B cell (primary cell): ENCODE measurements at regions of chr12 and their contacts with region 1.

Region 1: DNA sequence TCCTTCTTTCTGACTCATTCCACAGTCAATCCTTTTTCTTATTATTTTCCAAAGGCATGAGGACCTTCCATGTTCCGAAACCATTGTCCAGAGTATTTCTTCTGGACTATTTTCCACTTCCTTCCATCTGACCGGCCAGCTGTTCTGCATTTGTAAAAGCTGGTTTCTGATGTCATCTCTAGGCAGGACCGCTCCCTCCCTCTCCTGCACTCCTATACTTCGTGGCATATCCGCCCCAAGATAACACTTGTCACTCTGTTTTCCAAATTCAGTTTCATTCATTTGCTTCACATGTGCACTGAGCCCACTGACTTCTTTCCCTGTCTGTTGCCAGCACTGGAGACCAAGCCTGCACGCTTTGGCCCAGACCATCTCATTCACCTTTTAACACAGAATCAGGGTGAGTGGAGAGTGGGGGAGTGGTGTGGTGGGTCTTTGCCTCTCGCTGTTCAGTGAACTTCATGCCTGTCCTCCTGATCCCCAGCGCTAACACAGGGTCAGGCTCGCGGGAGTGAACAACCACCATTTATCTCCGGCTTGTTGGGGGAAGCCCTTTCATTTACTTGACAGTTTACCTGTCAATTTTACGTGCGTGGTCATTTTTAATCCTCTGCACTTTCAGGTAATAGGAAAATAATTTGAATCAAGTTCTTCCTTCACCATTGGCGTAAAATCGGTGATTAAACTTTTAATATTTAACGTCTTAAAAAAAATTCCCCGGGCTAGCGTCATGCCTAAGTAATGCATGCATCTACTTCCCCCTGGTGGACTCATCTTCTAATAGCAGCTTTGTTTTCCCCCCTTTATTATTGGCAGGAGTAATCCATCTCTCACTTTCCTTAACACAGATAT is 52.5 kb downstream of the C12orf75 start:
- DNase-seq: peak; percentile 71
- ATAC-seq: peak; percentile 66
- H3K4me3 ChIP-seq: no peak overlapping the region
- H3K4me3 Mint-ChIP-seq: no peak overlapping the region
- H3K27ac ChIP-seq: no peak overlapping the region
- H3K27ac Mint-ChIP-seq: no peak overlapping the region
- H3K4me1 ChIP-seq: peaks cover 0 to 3% of the 10 kb centered on the region in 2 donors
- H3K4me1 Mint-ChIP-seq: no peaks in the 10 kb centered on the region
- H3K27me3 ChIP-seq: no peaks in the 10 kb centered on the region
- H3K27me3 Mint-ChIP-seq: no peaks in the 10 kb centered on the region
- CTCF ChIP-seq: peak; percentile 87

Region 2: DNA sequence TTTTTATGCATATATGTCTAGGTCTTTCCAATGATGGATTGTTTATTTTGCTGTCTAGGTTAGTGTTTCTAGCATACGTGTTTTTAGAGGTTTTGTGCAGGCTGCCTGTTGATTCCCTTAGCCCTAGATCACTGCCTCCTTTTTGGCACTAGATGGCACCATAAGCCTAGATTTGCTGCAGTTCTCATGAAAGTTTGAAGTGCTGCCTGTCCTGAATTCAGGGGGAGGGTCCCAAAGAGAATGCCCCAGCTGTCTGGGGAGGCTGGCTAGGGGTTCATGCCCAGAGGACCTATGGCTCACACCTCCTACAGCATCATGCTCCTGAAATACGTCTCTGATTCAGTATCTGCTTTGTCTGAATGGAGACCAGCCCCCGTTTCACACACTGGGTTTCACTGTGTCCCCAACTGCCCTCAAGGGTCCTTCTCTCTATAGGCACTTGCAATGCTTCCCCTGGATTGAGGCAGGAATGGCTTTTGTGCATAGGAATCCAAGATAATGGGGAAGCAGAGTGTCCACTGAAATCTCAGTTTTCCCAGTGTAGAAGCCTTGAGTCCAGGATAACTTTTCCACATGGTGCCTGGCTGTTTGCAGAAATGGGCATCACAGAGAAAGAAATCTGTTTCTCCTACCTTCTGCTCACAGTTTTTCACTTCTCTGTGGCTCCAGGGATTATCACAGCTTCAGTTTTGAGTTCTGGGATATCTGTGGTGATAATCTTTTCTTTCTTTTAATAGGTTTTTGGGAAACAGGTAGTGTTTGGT is 1181.6 kb before region 1 on chr12:
- CTCF ChIA-PET with region 1: interaction called, 14 read pairs
- POLR2A ChIA-PET with region 1: no interaction called
- intact Hi-C with region 1: loop called (anchors 1 kb)
- DNase-seq: peak; percentile 79
- ATAC-seq: peak; percentile 73
- H3K4me3 ChIP-seq: no peak overlapping the region
- H3K4me3 Mint-ChIP-seq: no peak overlapping the region
- H3K27ac ChIP-seq: no peak overlapping the region
- H3K27ac Mint-ChIP-seq: no peak overlapping the region
- H3K4me1 ChIP-seq: no peaks in the 10 kb centered on the region
- H3K4me1 Mint-ChIP-seq: peaks cover 1% of the 10 kb centered on the region
- H3K27me3 ChIP-seq: peaks cover 0 to 4% (median 1%) of the 10 kb centered on the region in 4 experiments
- H3K27me3 Mint-ChIP-seq: peaks cover 19% of the 10 kb centered on the region
- CTCF ChIP-seq: peak; percentile 89

Region 3: DNA sequence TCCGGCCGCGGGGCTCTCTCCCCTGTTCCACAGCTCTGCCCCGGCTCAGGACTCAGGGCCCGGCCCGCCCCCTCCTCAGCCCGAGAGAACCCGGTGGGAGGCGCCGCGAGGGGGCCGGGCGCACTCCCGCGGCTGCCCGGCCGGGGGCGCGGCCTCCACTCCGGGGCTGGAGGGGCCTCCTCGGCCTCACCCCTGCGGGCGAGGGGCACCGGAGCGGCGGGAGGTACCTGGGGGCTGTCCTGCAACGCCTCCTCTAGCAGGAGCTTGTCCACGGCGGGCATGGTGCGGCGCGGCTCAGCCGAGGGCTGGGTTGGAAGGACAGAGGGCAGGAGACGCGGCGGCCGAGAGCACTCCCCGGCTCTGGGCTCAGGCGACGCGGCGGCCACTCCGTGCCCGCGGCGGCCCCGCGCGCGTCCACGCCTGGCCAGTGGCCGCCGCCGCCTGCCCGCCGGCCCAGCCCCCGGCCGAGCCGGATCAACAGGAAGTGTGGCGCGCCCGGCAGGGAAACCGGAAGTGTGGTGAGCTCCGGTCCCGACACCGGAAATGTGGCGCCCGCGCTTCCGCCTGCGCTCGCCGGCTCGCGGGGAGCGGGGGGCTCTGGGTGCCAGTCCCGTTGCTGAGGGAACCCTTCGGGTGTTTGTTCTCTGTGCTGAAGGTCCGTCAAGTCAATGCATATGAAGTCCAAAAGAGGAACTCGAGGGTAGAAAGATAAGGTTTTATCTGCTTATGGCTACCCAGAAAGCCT is 147.1 kb before region 1 on chr12 and contains the start of gene APPL2:
- CTCF ChIA-PET with region 1: interaction called, 14 read pairs
- POLR2A ChIA-PET with region 1: no interaction called
- intact Hi-C with region 1: loop called (anchors 5 kb)
- DNase-seq: peak; percentile 92
- ATAC-seq: peak; percentile 81
- H3K4me3 ChIP-seq: peak within 1 kb of the TSS; percentile 51 to 90 (median 71)
- H3K4me3 Mint-ChIP-seq: peak within 1 kb of the TSS; percentile 95
- H3K27ac ChIP-seq: peak within 1 kb of the TSS; percentile 70 to 95
- H3K27ac Mint-ChIP-seq: peak within 1 kb of the TSS; percentile 94
- H3K4me1 ChIP-seq: peaks cover 44 to 49% of the 10 kb centered on the region in 2 donors
- H3K4me1 Mint-ChIP-seq: peaks cover 38% of the 10 kb centered on the region
- H3K27me3 ChIP-seq: no peaks in the 10 kb centered on the region
- H3K27me3 Mint-ChIP-seq: no peaks in the 10 kb centered on the region
- CTCF ChIP-seq: peak; percentile 66
- total RNA-seq, gene APPL2: 57.7 and 58.3 TPM in 2 replicates

Region 4: DNA sequence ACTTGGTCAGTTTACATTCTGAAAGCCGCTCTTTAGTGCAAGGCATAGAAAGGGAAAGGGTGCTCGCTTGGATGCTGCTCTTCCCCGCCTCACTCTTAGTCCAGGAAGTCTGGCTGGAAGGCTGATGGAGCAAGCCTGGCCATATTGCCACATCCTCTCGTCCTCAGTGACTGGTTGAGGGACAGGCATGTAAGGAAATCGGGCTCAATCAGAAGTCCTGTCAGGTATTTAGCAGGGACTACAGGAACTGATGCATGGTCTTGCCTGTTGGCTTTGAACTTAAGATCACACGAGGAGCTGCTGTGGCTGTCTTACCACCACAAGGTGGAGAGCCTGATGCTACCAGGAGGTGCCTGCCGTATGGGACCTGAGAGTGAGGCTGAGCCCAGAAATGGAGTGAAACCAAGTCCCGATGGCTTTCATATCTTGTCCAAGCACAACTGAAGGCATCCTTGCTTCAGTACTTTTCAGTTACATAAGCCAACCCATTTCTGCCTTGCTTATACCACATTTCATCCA is 63.2 kb before region 1 on chr12:
- CTCF ChIA-PET with region 1: interaction called, 8 read pairs
- POLR2A ChIA-PET with region 1: no interaction called
- intact Hi-C with region 1: loop called (anchors 2 kb)
- DNase-seq: no peak
- ATAC-seq: no peak
- H3K4me3 ChIP-seq: no peak overlapping the region
- H3K4me3 Mint-ChIP-seq: no peak overlapping the region
- H3K27ac ChIP-seq: no peak overlapping the region
- H3K27ac Mint-ChIP-seq: no peak overlapping the region
- H3K4me1 ChIP-seq: no peaks in the 10 kb centered on the region
- H3K4me1 Mint-ChIP-seq: no peaks in the 10 kb centered on the region
- H3K27me3 ChIP-seq: no peaks in the 10 kb centered on the region
- H3K27me3 Mint-ChIP-seq: no peaks in the 10 kb centered on the region
- CTCF ChIP-seq: no peak

Region 5: GRCh38 chr12:105393587-105393986 is 10.6 kb after region 1 on chr12:
- CTCF ChIA-PET with region 1: interaction called, 11 read pairs
- POLR2A ChIA-PET with region 1: no interaction called
- intact Hi-C with region 1: no loop called
- DNase-seq: no peak
- ATAC-seq: no peak
- H3K4me3 ChIP-seq: no peak overlapping the region
- H3K4me3 Mint-ChIP-seq: no peak overlapping the region
- H3K27ac ChIP-seq: no peak overlapping the region
- H3K27ac Mint-ChIP-seq: no peak overlapping the region
- H3K4me1 ChIP-seq: no peaks in the 10 kb centered on the region
- H3K4me1 Mint-ChIP-seq: no peaks in the 10 kb centered on the region
- H3K27me3 ChIP-seq: no peaks in the 10 kb centered on the region
- H3K27me3 Mint-ChIP-seq: no peaks in the 10 kb centered on the region
- CTCF ChIP-seq: no peak

Region 6: DNA sequence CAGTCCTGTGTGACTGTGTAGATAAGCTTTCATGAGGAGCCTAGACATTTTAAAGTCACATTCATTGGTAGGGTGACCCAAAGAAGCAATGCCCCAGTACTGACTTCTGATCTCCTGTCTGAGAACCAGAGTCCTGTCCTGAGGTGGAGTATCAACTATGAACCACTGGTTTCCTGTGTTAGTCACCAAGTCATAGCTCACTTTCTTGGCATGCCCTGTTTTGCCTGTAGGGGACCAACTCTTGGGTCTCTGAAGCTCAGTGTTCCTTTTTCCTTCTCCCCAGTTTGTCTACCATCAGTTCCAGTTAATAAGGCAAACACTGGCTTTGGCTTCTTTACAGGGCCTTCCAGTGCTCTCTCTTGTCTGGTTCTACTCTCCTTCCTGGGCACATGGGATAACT is 44.9 kb after region 1 on chr12:
- CTCF ChIA-PET with region 1: no interaction called
- POLR2A ChIA-PET with region 1: no interaction called
- intact Hi-C with region 1: no loop called
- DNase-seq: no peak
- ATAC-seq: no peak
- H3K4me3 ChIP-seq: no peak overlapping the region
- H3K4me3 Mint-ChIP-seq: no peak overlapping the region
- H3K27ac ChIP-seq: no peak overlapping the region
- H3K27ac Mint-ChIP-seq: no peak overlapping the region
- H3K4me1 ChIP-seq: no peaks in the 10 kb centered on the region
- H3K4me1 Mint-ChIP-seq: no peaks in the 10 kb centered on the region
- H3K27me3 ChIP-seq: peaks cover 0 to 16% (median 8%) of the 10 kb centered on the region in 4 experiments
- H3K27me3 Mint-ChIP-seq: peaks cover 33% of the 10 kb centered on the region
- CTCF ChIP-seq: no peak